AG04450 (cell line): ENCODE measurements at regions of chr17 and their contacts with region 1.

Region 1: GRCh38 chr17:17653343-17653742 is 27.9 kb upstream of the RAI1 start:
- DNase-seq: no peak
- H3K4me3 ChIP-seq: no peak overlapping the region
- H3K27ac ChIP-seq: no peak overlapping the region
- H3K27me3 ChIP-seq: peaks cover 12% of the 10 kb centered on the region
- CTCF ChIP-seq: no peak

Region 2: DNA sequence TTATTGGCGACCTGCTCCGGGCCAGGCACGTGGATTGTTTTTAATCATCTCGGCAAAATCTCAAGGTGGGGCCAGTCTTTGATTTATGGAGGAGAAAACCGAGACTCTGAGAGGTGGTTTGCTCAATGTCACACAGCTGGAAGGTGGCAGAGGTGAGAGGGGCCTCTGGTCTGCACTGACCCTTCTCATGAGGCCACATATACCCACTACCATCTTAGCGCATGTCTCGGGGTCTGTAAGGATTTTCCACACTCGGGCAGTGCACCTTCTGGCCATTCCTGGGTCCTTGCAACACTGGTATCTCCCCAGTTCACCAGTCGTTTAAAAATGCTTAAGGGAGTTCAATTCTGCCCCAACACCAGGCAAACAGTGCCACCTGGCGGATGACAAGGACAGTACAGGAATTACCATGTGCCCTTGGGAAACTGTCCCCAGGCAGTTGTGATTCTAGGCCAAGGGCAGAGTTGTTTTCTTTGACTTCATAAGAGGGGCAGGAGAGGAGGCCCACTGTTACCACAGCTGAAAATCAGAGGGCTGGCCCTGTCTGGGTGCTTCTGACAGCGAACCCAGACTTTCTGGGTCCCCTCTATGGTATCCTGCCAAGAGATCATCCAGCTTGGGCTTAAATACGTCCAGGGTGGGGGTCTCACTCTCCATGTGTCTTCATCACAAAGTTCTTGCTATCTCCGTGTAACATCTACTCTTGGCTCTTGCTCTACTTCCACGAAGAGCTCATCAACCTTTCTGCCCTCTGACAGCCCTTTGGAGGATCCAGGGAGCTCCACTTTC is 11.5 kb before region 1 on chr17:
- CTCF ChIA-PET with region 1: interaction called, 11 read pairs
- POLR2A ChIA-PET with region 1: no interaction called
- DNase-seq: peak; percentile 56
- H3K4me3 ChIP-seq: no peak overlapping the region
- H3K27ac ChIP-seq: no peak overlapping the region
- H3K27me3 ChIP-seq: peaks cover 5% of the 10 kb centered on the region
- CTCF ChIP-seq: peak; percentile 87